Breast epithelium (tissue), 4 donors: ENCODE measurements at regions of chr4 and their contacts with region 1.

Region 1: GRCh38 chr4:89994176-89994873 is 99.7 kb downstream of the MMRN1 start:
- DNase-seq: no peak
- H3K4me3 ChIP-seq: no peak overlapping the region
- H3K27ac ChIP-seq: no peak overlapping the region
- H3K4me1 ChIP-seq: no peaks in the 10 kb centered on the region
- H3K27me3 ChIP-seq: no peaks in the 10 kb centered on the region
- CTCF ChIP-seq: no peak
- POLR2A ChIP-seq: no peak

Region 2: GRCh38 chr4:89939994-89940393 is 54.3 kb before region 1 on chr4:
- intact Hi-C with region 1: no loop called
- DNase-seq: no peak
- H3K4me3 ChIP-seq: no peak overlapping the region
- H3K27ac ChIP-seq: no peak overlapping the region
- H3K4me1 ChIP-seq: no peaks in the 10 kb centered on the region
- H3K27me3 ChIP-seq: no peaks in the 10 kb centered on the region
- CTCF ChIP-seq: no peak
- POLR2A ChIP-seq: no peak

Region 3: GRCh38 chr4:90281541-90282355 is 287.4 kb after region 1 on chr4:
- intact Hi-C with region 1: loop called (anchors 5 kb)
- DNase-seq: no peak
- H3K4me3 ChIP-seq: no peak overlapping the region
- H3K27ac ChIP-seq: no peak overlapping the region
- H3K4me1 ChIP-seq: no peaks in the 10 kb centered on the region
- H3K27me3 ChIP-seq: no peaks in the 10 kb centered on the region
- CTCF ChIP-seq: no peak
- POLR2A ChIP-seq: no peak

Region 4: DNA sequence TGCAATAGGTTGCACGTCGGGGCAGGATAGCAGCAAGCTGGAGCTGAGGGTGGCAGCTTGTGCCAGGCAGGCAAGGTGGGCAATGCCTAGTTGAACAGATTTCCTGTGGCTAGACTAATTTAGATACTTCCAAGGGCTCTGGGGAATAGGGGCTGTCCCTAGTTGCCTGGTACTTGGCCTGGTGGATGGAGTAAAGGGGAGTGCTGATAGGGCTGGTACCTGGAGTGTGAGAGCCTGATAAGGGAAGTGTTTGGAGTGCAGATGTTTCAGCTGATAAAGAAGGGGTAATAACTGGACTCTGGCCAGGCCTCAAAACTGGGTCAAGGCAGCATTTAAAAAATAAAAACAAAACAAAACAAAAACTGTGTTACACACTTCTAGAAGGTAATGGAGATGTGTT is 798.4 kb after region 1 on chr4:
- intact Hi-C with region 1: no loop called
- DNase-seq: no peak
- H3K4me3 ChIP-seq: no peak overlapping the region
- H3K27ac ChIP-seq: no peak overlapping the region
- H3K4me1 ChIP-seq: no peaks in the 10 kb centered on the region
- H3K27me3 ChIP-seq: no peaks in the 10 kb centered on the region
- CTCF ChIP-seq: no peak
- POLR2A ChIP-seq: no peak